Motor neuron (in vitro differentiated cells): ENCODE measurements at regions of chr16 and their contacts with region 1.

Region 1: GRCh38 chr16:82639666-82640336 is 13.0 kb downstream of the CDH13 start:
- ATAC-seq: peak; percentile 43 to 82 (median 58)
- H3K4me3 ChIP-seq: no peak overlapping the region
- H3K27ac ChIP-seq: no peak overlapping the region
- H3K4me1 ChIP-seq: peaks cover 0 to 9% of the 10 kb centered on the region in 2 donors

Region 2: DNA sequence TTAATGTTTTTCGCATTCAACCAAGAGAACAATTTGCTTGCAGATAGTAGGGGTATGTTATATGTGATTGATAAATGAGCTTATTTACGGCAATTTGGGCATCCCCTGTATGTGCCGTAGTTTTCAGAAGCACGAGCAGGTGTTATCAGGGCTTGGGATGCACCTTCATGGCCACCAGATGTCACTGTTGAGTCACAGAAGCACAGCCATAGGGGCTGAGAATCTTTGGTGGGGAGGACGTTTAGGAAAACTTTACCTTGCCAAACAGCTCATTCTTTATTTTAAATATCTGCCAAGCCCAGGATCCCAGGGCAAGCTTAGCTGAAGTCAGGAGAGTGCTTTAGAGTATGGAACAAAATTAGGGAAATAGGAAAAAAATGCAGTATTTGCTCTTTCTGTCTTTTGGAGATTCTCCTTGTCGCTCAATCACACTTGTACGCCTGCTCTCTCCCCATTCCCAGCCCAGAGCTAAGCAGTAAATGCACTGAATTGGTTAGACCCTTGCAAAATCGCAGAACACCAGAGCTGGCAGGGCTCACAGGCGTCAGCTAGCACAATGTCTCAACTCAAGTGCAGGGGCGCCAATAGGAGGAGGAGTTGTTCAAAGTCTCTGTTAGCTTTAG is 376.2 kb before region 1 on chr16:
- in situ Hi-C with region 1: loop called in 1 of 9 experiments (anchors 25 kb)
- ATAC-seq: peak; percentile 72 to 89 (median 80)
- H3K4me3 ChIP-seq: no peak overlapping the region
- H3K27ac ChIP-seq: no peak overlapping the region
- H3K4me1 ChIP-seq: peaks cover 7 to 10% of the 10 kb centered on the region in 2 donors

Region 3: GRCh38 chr16:82995924-82996441 is 356.2 kb after region 1 on chr16:
- in situ Hi-C with region 1: no loop called
- ATAC-seq: peak in 7 of 8 experiments; percentile 87 to 97 (median 89)
- H3K4me3 ChIP-seq: no peak overlapping the region
- H3K27ac ChIP-seq: no peak overlapping the region
- H3K4me1 ChIP-seq: peaks cover 0 to 9% of the 10 kb centered on the region in 2 donors

Region 4: GRCh38 chr16:83040174-83040573 is 400.4 kb after region 1 on chr16:
- in situ Hi-C with region 1: no loop called
- ATAC-seq: no peak
- H3K4me3 ChIP-seq: no peak overlapping the region
- H3K27ac ChIP-seq: no peak overlapping the region
- H3K4me1 ChIP-seq: no peaks in the 10 kb centered on the region

Region 5: GRCh38 chr16:83068686-83069085 is 428.9 kb after region 1 on chr16:
- in situ Hi-C with region 1: loop called in 1 of 9 experiments (anchors 25 kb)
- ATAC-seq: peak in 1 of 8 experiments; percentile 37
- H3K4me3 ChIP-seq: no peak overlapping the region
- H3K27ac ChIP-seq: no peak overlapping the region
- H3K4me1 ChIP-seq: peaks cover 3 to 10% of the 10 kb centered on the region in 2 donors

Region 6: GRCh38 chr16:83215406-83216001 is 575.7 kb after region 1 on chr16:
- in situ Hi-C with region 1: loop called in 1 of 9 experiments (anchors 25 kb)
- ATAC-seq: peak in 3 of 8 experiments; percentile 75 to 78 (median 78)
- H3K4me3 ChIP-seq: no peak overlapping the region
- H3K27ac ChIP-seq: no peak overlapping the region
- H3K4me1 ChIP-seq: no peaks in the 10 kb centered on the region